Activated CD4-positive, alpha-beta T cell treated with anti-CD3 and anti-CD28 coated beads for 36 hours (primary cell): ENCODE measurements at regions of chr4 and their contacts with region 1.

Region 1: GRCh38 chr4:140861359-140862176 is 105.4 kb upstream of the TBC1D9 start:
- DNase-seq: peak; percentile 73
- ATAC-seq: peak; percentile 68
- H3K4me3 Mint-ChIP-seq: no peak overlapping the region
- H3K27ac Mint-ChIP-seq: no peak overlapping the region
- H3K4me1 Mint-ChIP-seq: no peaks in the 10 kb centered on the region
- H3K27me3 Mint-ChIP-seq: peaks cover 14% of the 10 kb centered on the region

Region 2: GRCh38 chr4:140884431-140885058 is 23.0 kb after region 1 on chr4:
- CTCF ChIA-PET with region 1: interaction called, 4 read pairs
- POLR2A ChIA-PET with region 1: no interaction called
- intact Hi-C with region 1: loop called in 1 of 2 experiments (anchors 1 kb)
- DNase-seq: peak; percentile 49
- ATAC-seq: no peak
- H3K4me3 Mint-ChIP-seq: no peak overlapping the region
- H3K27ac Mint-ChIP-seq: no peak overlapping the region
- H3K4me1 Mint-ChIP-seq: no peaks in the 10 kb centered on the region
- H3K27me3 Mint-ChIP-seq: peaks cover 4% of the 10 kb centered on the region

Region 3: GRCh38 chr4:141121768-141122454 is 260.3 kb after region 1 on chr4:
- CTCF ChIA-PET with region 1: no interaction called
- POLR2A ChIA-PET with region 1: no interaction called
- intact Hi-C with region 1: no loop called
- DNase-seq: peak; percentile 66
- ATAC-seq: peak; percentile 99
- H3K4me3 Mint-ChIP-seq: no peak overlapping the region
- H3K27ac Mint-ChIP-seq: no peak overlapping the region
- H3K4me1 Mint-ChIP-seq: peaks cover 14% of the 10 kb centered on the region
- H3K27me3 Mint-ChIP-seq: peaks cover 33% of the 10 kb centered on the region

Region 4: GRCh38 chr4:141133146-141133998 is 271.8 kb after region 1 on chr4 and contains the start of gene RNF150:
- CTCF ChIA-PET with region 1: interaction called, 22 read pairs
- POLR2A ChIA-PET with region 1: no interaction called
- intact Hi-C with region 1: loop called (anchors 1 kb)
- DNase-seq: peak; percentile 80
- ATAC-seq: peak; percentile 80
- H3K4me3 Mint-ChIP-seq: peak within 1 kb of the TSS; percentile 78
- H3K27ac Mint-ChIP-seq: no peak within 1 kb of the TSS
- H3K4me1 Mint-ChIP-seq: peaks cover 14% of the 10 kb centered on the region
- H3K27me3 Mint-ChIP-seq: peaks cover 57% of the 10 kb centered on the region
- total RNA-seq, gene RNF150: 0.02 to 0.14 TPM

Region 5: GRCh38 chr4:141240671-141241070 is 379.1 kb after region 1 on chr4:
- CTCF ChIA-PET with region 1: no interaction called
- POLR2A ChIA-PET with region 1: no interaction called
- intact Hi-C with region 1: no loop called
- DNase-seq: no peak
- ATAC-seq: no peak
- H3K4me3 Mint-ChIP-seq: no peak overlapping the region
- H3K27ac Mint-ChIP-seq: no peak overlapping the region
- H3K4me1 Mint-ChIP-seq: no peaks in the 10 kb centered on the region
- H3K27me3 Mint-ChIP-seq: peaks cover 5% of the 10 kb centered on the region